ENCODE measurements at regions of chr4 and their contacts with region 1.

Region 1: DNA sequence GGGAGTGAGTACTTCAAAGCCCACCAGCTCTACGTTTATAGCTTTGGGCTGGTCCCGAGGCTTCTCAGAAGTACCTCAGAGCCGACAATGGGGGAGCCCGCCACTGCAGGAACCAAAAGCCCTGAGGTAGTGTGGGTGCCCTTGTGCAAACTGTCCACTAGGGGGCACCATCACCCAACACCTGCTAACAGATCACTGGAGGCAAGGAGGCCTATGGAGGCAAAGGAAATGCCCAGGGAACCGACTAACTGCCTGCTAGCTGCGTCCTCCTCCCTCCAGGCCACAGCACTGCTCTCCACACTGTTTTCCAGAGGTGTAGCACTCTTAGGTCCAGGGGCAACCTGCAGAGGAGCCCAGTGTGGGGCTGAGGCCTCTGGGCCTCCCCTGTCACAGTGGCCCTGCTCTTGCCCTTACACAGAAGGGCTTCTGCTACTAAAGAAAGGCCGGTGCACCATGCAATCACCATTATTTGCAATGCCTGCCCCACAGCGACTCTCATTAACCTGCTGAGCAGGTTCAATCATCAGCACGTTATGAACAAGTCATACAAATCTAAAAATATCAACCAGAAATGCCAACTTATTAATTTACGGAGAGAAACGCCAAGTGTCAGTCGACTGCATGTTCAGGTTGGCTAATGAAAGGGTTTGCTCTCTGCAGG is 159.1 kb downstream of the NSUN7 start:
- DNase-seq: peak; percentile 61
- H3K4me3 Mint-ChIP-seq: peak overlapping the region; percentile 43
- H3K27ac Mint-ChIP-seq: peak overlapping the region; percentile 91
- H3K4me1 Mint-ChIP-seq: peaks cover 34% of the 10 kb centered on the region
- H3K27me3 Mint-ChIP-seq: no peaks in the 10 kb centered on the region

Region 2: DNA sequence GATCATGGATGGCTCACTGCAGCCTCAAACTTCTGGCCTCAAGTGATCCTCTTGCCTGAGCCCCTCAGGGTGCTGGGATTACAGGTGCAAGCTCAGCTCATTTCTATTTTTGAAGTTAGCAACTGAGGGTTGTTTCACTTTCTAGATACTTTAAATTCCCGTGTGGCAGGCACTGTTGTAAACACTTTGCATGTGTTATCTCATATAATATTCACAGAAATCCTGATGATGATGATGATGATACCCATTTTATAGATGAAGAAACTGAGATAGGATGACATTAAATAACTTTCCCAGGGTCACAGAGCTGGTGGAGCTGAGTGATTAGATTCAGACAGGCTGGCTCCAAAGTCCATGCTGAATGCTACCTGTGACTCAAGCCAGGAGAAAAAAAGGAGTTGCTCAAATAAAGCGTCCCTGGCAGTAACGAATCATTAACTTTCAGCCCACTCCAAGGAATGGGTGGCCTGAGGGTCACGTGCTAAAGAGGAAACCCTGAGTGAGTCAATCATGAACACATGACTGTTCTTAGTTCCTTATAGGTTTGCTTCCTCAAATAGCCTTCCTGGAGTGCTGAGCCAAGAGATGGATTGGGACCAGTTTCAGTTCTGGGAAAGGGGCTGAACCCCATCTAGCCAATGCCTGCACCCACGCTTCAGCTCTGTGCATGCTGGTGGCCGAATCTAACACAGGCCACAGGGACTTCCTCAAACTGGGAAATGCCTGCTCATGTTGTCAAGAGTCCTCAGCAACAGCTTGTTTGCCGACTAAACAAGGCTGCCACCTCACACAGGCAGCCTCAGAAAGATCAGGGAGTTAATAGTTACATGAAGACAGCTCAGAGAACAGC is 332.0 kb before region 1 on chr4:
- intact Hi-C with region 1: loop called (anchors 2 kb)
- DNase-seq: no peak
- H3K4me3 Mint-ChIP-seq: peak overlapping the region; percentile 35
- H3K27ac Mint-ChIP-seq: peak overlapping the region; percentile 74
- H3K4me1 Mint-ChIP-seq: peaks cover 57% of the 10 kb centered on the region
- H3K27me3 Mint-ChIP-seq: peaks cover 2% of the 10 kb centered on the region

Region 3: GRCh38 chr4:40763228-40763716 is 145.6 kb before region 1 on chr4:
- intact Hi-C with region 1: loop called (anchors 1 kb)
- DNase-seq: peak; percentile 55
- H3K4me3 Mint-ChIP-seq: peak overlapping the region; percentile 40
- H3K27ac Mint-ChIP-seq: peak overlapping the region; percentile 3
- H3K4me1 Mint-ChIP-seq: peaks cover 11% of the 10 kb centered on the region
- H3K27me3 Mint-ChIP-seq: no peaks in the 10 kb centered on the region

Region 4: GRCh38 chr4:41214136-41214824 is 305.4 kb after region 1 on chr4 and contains the start of gene APBB2:
- intact Hi-C with region 1: loop called (anchors 1 kb)
- DNase-seq: peak; percentile 27
- H3K4me3 Mint-ChIP-seq: peak within 1 kb of the TSS; percentile 80
- H3K27ac Mint-ChIP-seq: no peak within 1 kb of the TSS
- H3K4me1 Mint-ChIP-seq: peaks cover 27% of the 10 kb centered on the region
- H3K27me3 Mint-ChIP-seq: peaks cover 42% of the 10 kb centered on the region
- total RNA-seq, gene APBB2: 11.0 and 11.3 TPM in 2 replicates